ENCODE measurements at regions of chr4 and their contacts with region 1.

Region 1: GRCh38 chr4:132065940-132066495 is 1083.1 kb upstream of the PCDH10 start:
- DNase-seq: peak; percentile 25
- ATAC-seq: no peak
- H3K4me3 ChIP-seq: no peak overlapping the region
- H3K27ac ChIP-seq: no peak overlapping the region
- H3K4me1 ChIP-seq: no peaks in the 10 kb centered on the region
- H3K27me3 ChIP-seq: no peaks in the 10 kb centered on the region
- CTCF ChIP-seq: no peak

Region 2: GRCh38 chr4:132114885-132115284 is 48.9 kb after region 1 on chr4:
- CTCF ChIA-PET with region 1: no interaction called
- POLR2A ChIA-PET with region 1: no interaction called
- in situ Hi-C with region 1: no loop called
- intact Hi-C with region 1: loop called (anchors 2 kb)
- DNase-seq: no peak
- ATAC-seq: no peak
- H3K4me3 ChIP-seq: no peak overlapping the region
- H3K27ac ChIP-seq: no peak overlapping the region
- H3K4me1 ChIP-seq: no peaks in the 10 kb centered on the region
- H3K27me3 ChIP-seq: no peaks in the 10 kb centered on the region
- CTCF ChIP-seq: no peak

Region 3: DNA sequence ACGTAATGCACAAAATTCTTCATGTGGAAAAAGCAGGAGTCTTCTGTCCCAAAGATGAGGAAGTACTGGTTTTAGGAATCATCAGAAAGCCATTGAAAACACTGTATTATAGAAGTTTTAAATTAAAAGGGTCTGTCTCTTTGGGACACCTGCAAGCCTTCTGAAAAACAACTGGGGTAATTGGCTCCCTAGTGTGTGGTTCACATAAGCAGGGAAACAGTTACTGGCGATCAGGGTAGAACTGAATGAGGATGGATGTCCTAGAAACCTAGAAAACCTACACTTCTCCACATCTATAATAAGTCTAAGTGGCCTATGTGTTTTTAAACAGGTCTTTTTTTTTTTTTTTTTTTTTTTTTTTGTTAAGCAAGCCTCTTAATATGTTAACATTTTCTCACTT is 137.6 kb after region 1 on chr4:
- CTCF ChIA-PET with region 1: no interaction called
- POLR2A ChIA-PET with region 1: no interaction called
- in situ Hi-C with region 1: no loop called
- intact Hi-C with region 1: no loop called
- DNase-seq: no peak
- ATAC-seq: no peak
- H3K4me3 ChIP-seq: no peak overlapping the region
- H3K27ac ChIP-seq: no peak overlapping the region
- H3K4me1 ChIP-seq: no peaks in the 10 kb centered on the region
- H3K27me3 ChIP-seq: no peaks in the 10 kb centered on the region
- CTCF ChIP-seq: no peak

Region 4: GRCh38 chr4:132383571-132384199 is 317.7 kb after region 1 on chr4:
- CTCF ChIA-PET with region 1: no interaction called
- POLR2A ChIA-PET with region 1: no interaction called
- in situ Hi-C with region 1: no loop called
- intact Hi-C with region 1: no loop called
- DNase-seq: no peak
- ATAC-seq: no peak
- H3K4me3 ChIP-seq: no peak overlapping the region
- H3K27ac ChIP-seq: no peak overlapping the region
- H3K4me1 ChIP-seq: no peaks in the 10 kb centered on the region
- H3K27me3 ChIP-seq: no peaks in the 10 kb centered on the region
- CTCF ChIP-seq: no peak

Measured in Panc1 (cell line).